ENCODE measurements at regions of chr2 and their contacts with region 1.

Region 1: DNA sequence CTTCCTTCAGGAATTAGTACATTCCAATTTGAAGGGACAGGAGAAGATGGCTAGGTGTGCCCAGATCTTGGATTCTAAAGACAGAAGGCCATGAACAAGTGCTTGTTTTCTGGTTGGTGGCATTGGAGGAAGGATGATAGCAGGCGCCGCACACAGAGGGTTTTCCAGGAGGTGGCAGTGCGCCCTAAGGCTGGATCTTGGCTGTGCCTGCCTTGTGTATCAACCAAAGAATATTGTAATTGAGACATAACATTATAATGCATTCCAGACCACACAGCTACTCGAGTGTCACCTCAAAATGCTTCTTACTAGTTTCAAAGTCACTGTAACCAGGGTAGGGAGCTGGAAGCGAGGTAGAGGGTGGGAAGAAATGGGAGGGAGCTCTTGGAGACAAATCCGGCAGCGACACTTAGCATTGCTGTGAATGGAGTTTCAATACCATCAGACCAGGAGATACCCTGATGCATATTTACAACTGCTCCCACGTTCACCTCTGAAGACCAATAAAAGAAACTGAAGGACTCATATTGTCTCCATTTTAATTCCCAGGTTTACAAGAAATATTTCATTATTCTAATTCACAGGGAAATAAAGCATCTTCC is 42.5 kb downstream of the CPO start:
- DNase-seq: peak; percentile 81 to 94 (median 88)
- H3K4me3 ChIP-seq: peak overlapping the region; percentile 19 to 71 (median 52)
- H3K27ac ChIP-seq: peak overlapping the region in 51 of 59 donors; percentile 3 to 87 (median 67)
- H3K27me3 ChIP-seq: no peaks in the 10 kb centered on the region
- CTCF ChIP-seq: peak; percentile 72 to 98 (median 92)

Region 2: DNA sequence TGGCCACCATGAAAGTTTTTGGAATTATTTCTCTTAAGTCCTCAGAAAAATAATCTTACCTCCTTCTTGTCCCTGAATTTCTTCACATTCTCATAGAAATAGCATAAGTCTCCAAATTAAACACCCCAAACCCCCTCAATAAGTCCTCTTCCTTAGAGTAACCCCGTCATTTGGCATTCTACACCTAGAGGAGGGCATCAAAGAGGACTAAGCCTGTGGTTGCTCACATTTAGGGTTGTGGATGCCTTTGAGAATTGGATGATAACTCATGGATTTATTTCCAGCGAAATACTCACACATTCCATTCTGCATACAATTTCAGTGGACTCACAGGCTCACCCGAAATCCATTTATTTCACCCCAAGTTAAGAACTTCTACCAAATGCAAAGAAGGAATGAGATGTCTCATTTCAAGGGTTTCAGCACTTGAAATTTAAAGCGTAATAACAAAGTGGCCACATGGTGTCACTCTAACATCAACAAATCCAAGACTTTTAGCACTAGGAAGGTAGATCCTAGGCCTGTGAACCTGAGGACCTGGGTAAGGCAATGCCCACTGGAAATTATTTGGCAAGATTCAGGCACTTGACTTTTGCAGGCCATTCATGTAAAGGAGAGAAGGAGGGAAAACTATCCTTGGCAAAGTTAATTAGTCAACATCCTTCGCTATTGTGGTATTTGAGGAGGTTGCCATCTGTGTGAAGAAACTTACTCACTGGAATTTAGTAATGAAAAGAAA is 288.3 kb before region 1 on chr2:
- intact Hi-C with region 1: loop called (anchors 10 kb)
- DNase-seq: peak in 1 of 10 donors; percentile 36
- H3K4me3 ChIP-seq: no peak overlapping the region
- H3K27ac ChIP-seq: no peak overlapping the region
- H3K27me3 ChIP-seq: peaks cover 0 to 3% (median 0%) of the 10 kb centered on the region in 45 donors
- CTCF ChIP-seq: peak; percentile 59 to 88 (median 73)

Region 3: DNA sequence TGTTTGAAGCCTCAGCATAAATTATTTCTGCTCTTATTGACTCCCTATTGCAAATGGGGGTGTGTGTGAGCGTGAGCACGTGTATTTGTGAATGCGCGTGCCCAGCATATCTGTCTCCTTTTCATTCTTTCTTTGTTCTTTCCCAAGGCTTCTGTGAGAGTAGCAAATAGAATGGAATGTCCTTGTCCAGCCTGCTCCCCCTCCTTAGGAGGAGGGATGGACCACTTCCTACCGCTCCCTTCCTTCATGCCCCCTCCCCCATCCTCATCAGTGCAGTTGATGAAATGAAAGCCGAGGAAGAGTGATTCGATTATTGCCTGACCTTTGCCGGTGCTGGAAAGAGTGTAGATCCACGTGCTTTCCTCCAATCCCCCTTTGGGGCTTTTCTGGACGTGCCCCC is 59.4 kb after region 1 on chr2:
- intact Hi-C with region 1: loop called in 1 of 2 experiments (anchors 2 kb)
- DNase-seq: no peak
- H3K4me3 ChIP-seq: peak overlapping the region; percentile 2 to 71 (median 48)
- H3K27ac ChIP-seq: peak overlapping the region; percentile 6 to 90 (median 79)
- H3K27me3 ChIP-seq: no peaks in the 10 kb centered on the region
- CTCF ChIP-seq: no peak

Region 4: DNA sequence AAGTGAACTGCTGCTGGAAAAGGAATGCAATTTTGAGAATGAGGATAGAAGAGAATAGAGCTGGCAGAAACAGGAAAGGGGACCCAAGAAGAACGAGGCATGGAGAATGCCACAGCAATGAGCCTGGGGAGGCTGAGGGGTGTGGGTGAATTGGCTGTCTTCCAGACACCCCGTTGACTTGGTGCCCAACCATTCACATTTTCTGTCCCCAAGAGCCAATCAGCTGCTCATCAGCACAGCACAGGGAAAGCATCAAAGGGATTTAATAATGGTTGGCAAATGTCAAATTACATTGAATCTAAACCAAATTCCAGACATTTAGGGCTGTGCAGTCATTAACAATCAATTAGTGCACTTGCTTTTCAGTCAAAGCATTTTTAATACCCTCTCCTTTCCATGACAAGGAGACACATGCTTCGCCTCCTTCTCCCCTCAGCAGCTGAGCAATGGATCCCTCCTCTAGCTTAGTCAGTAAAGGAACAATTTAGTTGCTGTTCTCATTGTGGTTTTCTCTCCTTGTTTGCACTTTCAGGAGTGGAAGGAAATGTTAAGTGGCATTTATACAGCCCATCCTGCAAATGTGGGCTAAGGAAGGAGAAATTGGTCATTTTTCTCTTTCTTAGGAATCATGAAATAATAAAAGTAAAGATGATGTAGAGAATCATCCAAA is 85.1 kb after region 1 on chr2:
- intact Hi-C with region 1: loop called in 1 of 2 experiments (anchors 5 kb)
- DNase-seq: peak in 2 of 10 donors; percentile 38 to 44
- H3K4me3 ChIP-seq: peak overlapping the region in 10 of 59 donors; percentile 0 to 17 (median 14)
- H3K27ac ChIP-seq: peak overlapping the region; percentile 14 to 91 (median 76)
- H3K27me3 ChIP-seq: no peaks in the 10 kb centered on the region
- CTCF ChIP-seq: no peak

Region 5: GRCh38 chr2:207258263-207258991 is 276.6 kb after region 1 on chr2:
- intact Hi-C with region 1: loop called in 1 of 2 experiments (anchors 10 kb)
- DNase-seq: peak in 8 of 10 donors; percentile 30 to 68 (median 55)
- H3K4me3 ChIP-seq: no peak overlapping the region
- H3K27ac ChIP-seq: peak overlapping the region in 44 of 59 donors; percentile 4 to 83 (median 50)
- H3K27me3 ChIP-seq: no peaks in the 10 kb centered on the region
- CTCF ChIP-seq: no peak

Region 6: GRCh38 chr2:207473049-207473930 is 491.4 kb after region 1 on chr2:
- intact Hi-C with region 1: loop called (anchors 1 to 2 kb)
- DNase-seq: peak; percentile 34 to 80 (median 66)
- H3K4me3 ChIP-seq: peak overlapping the region in 51 of 59 donors; percentile 1 to 57 (median 32)
- H3K27ac ChIP-seq: peak overlapping the region in 52 of 59 donors; percentile 0 to 86 (median 63)
- H3K27me3 ChIP-seq: no peaks in the 10 kb centered on the region
- CTCF ChIP-seq: peak; percentile 41 to 85 (median 76)